Gastrocnemius medialis (tissue), 4 donors: ENCODE measurements at regions of chr14 and their contacts with region 1.

Region 1: GRCh38 chr14:99266181-99267178 is 5.5 kb downstream of the BCL11B start:
- DNase-seq: peak; percentile 34 to 40
- ATAC-seq: peak in 1 of 2 donors; percentile 65
- H3K4me3 ChIP-seq: no peak overlapping the region
- H3K27ac ChIP-seq: no peak overlapping the region
- H3K4me1 ChIP-seq: peaks cover 8 to 15% of the 10 kb centered on the region in 2 donors
- H3K27me3 ChIP-seq: peaks cover 43 to 52% (median 50%) of the 10 kb centered on the region in 3 donors
- CTCF ChIP-seq: peak; percentile 83 to 95 (median 91)
- POLR2A ChIP-seq: no peak

Region 2: DNA sequence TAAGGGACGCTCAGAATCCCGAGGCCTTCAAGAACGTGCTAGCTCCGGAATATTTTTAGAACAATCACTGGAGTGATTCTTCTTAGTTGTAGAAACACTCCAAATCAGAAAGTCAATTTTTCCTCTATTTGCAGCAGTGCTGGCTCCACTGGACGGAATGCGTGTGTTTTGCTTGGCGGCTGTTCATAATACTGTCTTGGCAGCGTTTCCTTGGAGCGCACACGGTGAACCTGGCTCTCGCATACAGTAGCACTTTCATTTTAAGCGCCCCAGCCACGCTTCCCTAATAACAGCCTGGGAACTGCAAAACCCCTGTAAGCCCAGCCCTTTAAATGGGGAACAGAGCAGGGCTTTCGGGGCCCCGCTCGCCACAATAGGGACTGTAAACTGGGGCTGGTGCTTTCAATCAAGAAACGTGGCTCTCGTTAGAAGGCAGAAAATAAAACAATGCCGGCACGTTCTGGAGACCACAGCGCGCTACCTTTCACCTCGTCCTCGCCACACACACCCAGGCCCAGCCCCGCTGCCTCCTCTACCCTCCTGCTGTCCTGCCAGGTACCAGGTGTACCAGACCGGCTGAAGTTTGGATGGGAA is 74.4 kb before region 1 on chr14:
- in situ Hi-C with region 1: no loop called
- intact Hi-C with region 1: loop called (anchors 10 kb)
- DNase-seq: peak in 1 of 2 donors; percentile 25
- ATAC-seq: peak; percentile 51 to 62
- H3K4me3 ChIP-seq: peak overlapping the region; percentile 50 to 59 (median 54)
- H3K27ac ChIP-seq: no peak overlapping the region
- H3K4me1 ChIP-seq: peaks cover 0 to 6% of the 10 kb centered on the region in 2 donors
- H3K27me3 ChIP-seq: peaks cover 0 to 3% (median 0%) of the 10 kb centered on the region in 3 donors
- CTCF ChIP-seq: no peak
- POLR2A ChIP-seq: no peak

Region 3: DNA sequence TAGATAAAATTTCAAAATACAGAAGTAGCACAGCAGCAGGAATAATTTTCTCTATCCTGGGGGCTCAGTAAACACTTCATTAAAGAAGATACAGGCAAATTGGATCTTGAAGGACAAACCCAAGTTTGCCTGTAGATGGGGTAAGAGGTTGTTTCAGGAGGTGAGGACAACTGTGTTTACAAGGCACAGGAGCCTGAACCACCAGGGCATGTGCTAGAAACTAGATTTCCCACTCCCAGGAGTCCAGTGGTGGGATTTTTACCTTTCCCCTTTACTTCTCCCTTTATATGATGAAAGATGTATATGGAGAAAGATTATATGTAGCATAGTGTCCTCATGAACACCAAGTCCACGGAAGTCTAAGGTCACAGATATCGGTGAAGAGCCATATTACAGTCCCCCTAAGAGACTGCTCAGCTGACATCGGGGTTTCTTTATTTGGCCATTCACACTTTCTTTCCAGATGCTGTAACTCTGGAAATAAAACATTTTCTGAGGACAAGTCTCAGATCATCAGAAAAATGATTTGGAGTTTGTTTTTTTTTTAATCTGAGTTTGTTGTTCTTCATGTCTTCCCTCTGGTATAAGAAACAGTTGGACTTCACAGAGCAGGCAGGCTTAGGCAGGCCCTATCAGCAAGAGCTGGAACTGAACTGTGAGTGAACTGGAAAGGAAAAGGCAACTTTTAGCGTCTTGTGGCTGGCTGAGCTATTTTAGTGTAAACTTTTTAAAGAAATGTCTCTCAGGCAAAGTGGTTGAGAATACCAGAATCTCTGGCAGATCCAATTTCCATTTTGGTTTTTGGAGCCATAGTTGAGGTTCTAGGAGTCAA is 790.7 kb after region 1 on chr14:
- in situ Hi-C with region 1: no loop called
- intact Hi-C with region 1: no loop called
- DNase-seq: no peak
- ATAC-seq: no peak
- H3K4me3 ChIP-seq: no peak overlapping the region
- H3K27ac ChIP-seq: peak overlapping the region in 2 of 4 donors; percentile 14 to 16
- H3K4me1 ChIP-seq: peaks cover 0 to 3% of the 10 kb centered on the region in 2 donors
- H3K27me3 ChIP-seq: no peaks in the 10 kb centered on the region
- CTCF ChIP-seq: peak in 1 of 5 experiments; percentile 19
- POLR2A ChIP-seq: no peak